ENCODE measurements at regions of chr4 and their contacts with region 1.

Region 1: GRCh38 chr4:7987148-7987989 is 47.7 kb upstream of the AFAP1 start:
- DNase-seq: peak; percentile 59
- H3K4me3 ChIP-seq: no peak overlapping the region
- H3K27ac ChIP-seq: no peak overlapping the region
- H3K4me1 ChIP-seq: peaks cover 12% of the 10 kb centered on the region
- H3K27me3 ChIP-seq: no peaks in the 10 kb centered on the region
- CTCF ChIP-seq: peak; percentile 85 to 95

Region 2: GRCh38 chr4:7761720-7762119 is 225.6 kb before region 1 on chr4:
- CTCF ChIA-PET with region 1: no interaction called
- dilution Hi-C with region 1: no loop called
- in situ Hi-C with region 1: no loop called
- intact Hi-C with region 1: loop called (anchors 1 kb)
- DNase-seq: no peak
- H3K4me3 ChIP-seq: no peak overlapping the region
- H3K27ac ChIP-seq: no peak overlapping the region
- H3K4me1 ChIP-seq: peaks cover 4% of the 10 kb centered on the region
- H3K27me3 ChIP-seq: no peaks in the 10 kb centered on the region
- CTCF ChIP-seq: peak; percentile 36 to 49

Region 3: DNA sequence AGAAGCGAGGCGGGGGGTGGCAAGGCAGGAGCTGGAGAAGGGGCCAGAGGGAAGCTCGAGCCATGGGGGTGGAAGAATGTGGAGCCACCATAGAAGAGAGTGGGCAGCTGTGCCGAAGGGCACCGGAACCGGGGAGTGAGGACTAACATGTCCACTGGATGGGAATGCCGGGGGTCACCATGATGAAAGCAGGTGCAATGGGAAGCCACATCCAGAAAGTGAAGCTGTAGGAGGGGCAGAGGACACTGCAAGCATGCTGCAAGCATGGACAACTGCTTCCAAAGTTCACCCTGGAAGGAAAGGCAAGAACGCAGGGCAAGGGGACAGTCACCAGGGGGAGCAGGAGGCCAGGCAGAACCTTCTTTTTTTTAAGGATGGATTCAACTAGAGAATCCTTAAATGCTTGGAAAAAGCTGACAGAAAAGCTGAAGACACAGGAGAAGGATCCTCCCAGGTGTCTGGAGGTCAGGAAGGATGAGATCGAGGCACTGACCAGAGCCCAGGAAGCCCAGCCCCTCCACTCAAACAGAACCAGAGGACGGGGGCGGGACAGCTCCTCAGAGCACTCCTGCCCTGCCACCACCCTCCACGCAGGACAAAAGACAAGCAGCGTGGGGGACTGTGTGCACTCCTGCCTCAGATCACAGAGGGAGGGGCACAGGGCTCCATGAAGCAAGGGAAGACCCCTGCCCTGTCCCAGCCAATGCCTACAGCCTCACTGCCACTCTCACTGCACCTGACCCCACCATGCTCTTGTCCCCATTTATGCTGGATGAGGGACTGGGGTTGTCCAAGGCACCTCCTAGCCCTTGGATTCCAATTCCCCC is 216.9 kb before region 1 on chr4:
- CTCF ChIA-PET with region 1: no interaction called
- dilution Hi-C with region 1: no loop called
- in situ Hi-C with region 1: no loop called
- intact Hi-C with region 1: loop called (anchors 1 kb)
- DNase-seq: no peak
- H3K4me3 ChIP-seq: no peak overlapping the region
- H3K27ac ChIP-seq: no peak overlapping the region
- H3K4me1 ChIP-seq: no peaks in the 10 kb centered on the region
- H3K27me3 ChIP-seq: no peaks in the 10 kb centered on the region
- CTCF ChIP-seq: peak; percentile 43 to 54

Region 4: GRCh38 chr4:7876201-7876875 is 111.0 kb before region 1 on chr4:
- CTCF ChIA-PET with region 1: no interaction called
- dilution Hi-C with region 1: no loop called
- in situ Hi-C with region 1: no loop called
- intact Hi-C with region 1: loop called (anchors 10 kb)
- DNase-seq: peak; percentile 66
- H3K4me3 ChIP-seq: no peak overlapping the region
- H3K27ac ChIP-seq: no peak overlapping the region
- H3K4me1 ChIP-seq: peaks cover 22% of the 10 kb centered on the region
- H3K27me3 ChIP-seq: no peaks in the 10 kb centered on the region
- CTCF ChIP-seq: peak; percentile 34 to 49

Region 5: DNA sequence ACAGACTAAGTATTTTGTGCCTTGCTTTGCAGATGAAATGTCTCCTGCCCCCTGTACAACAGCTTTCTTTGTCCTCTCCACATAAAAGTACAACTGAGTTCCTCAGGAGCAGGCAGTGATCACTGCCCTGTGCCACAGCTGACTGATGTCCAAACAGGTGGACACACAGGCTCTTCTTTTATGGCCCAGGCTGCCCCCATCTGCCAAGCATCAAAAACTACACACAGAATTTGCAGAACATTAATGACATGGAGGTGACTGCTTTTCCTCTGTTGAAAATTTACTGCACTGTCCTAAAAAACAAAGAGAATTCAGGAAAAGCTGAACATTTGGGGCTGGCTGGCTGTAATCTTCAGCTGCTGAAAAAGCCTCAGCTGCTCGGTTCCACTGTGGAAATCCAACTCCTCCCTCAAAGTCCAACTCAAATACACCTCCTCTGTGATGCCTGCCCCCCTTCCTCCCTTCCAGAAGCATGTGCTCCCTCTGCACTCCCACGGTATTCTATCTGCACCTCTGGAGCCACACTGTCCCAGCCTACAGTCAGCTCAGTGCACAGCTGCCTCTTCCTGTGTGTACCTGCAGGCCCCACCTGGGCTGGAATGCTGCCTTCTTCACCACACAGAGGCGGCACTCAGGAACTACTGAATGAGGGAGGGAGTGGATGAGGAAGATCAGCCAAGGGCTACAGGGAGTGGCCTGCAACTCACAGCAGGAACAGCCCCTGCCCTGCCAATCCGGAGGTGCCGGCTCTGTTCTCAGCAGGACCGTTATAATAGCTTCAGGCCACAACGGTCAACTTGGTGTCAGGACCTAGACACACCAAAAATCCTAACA is 58.0 kb before region 1 on chr4:
- CTCF ChIA-PET with region 1: no interaction called
- dilution Hi-C with region 1: no loop called
- in situ Hi-C with region 1: no loop called
- intact Hi-C with region 1: loop called (anchors 1 kb)
- DNase-seq: peak; percentile 90
- H3K4me3 ChIP-seq: no peak overlapping the region
- H3K27ac ChIP-seq: peak overlapping the region; percentile 33
- H3K4me1 ChIP-seq: peaks cover 33% of the 10 kb centered on the region
- H3K27me3 ChIP-seq: no peaks in the 10 kb centered on the region
- CTCF ChIP-seq: peak in 1 of 2 donors; percentile 56

Region 6: GRCh38 chr4:7939377-7940108 is 47.8 kb before region 1 on chr4 and contains the start of gene AFAP1:
- CTCF ChIA-PET with region 1: no interaction called
- dilution Hi-C with region 1: no loop called
- in situ Hi-C with region 1: no loop called
- intact Hi-C with region 1: loop called (anchors 2 kb)
- DNase-seq: peak; percentile 83
- H3K4me3 ChIP-seq: peak within 1 kb of the TSS; percentile 90 to 98 (median 93)
- H3K27ac ChIP-seq: peak within 1 kb of the TSS; percentile 72
- H3K4me1 ChIP-seq: peaks cover 11% of the 10 kb centered on the region
- H3K27me3 ChIP-seq: no peaks in the 10 kb centered on the region
- CTCF ChIP-seq: no peak
- total RNA-seq, gene AFAP1: 22.9 to 36.0 TPM

Region 7: GRCh38 chr4:7973545-7973981 is 13.8 kb before region 1 on chr4:
- CTCF ChIA-PET with region 1: interaction called, 13 read pairs
- dilution Hi-C with region 1: no loop called
- in situ Hi-C with region 1: no loop called
- intact Hi-C with region 1: no loop called
- DNase-seq: peak; percentile 90
- H3K4me3 ChIP-seq: no peak overlapping the region
- H3K27ac ChIP-seq: peak overlapping the region; percentile 77
- H3K4me1 ChIP-seq: peaks cover 48% of the 10 kb centered on the region
- H3K27me3 ChIP-seq: no peaks in the 10 kb centered on the region
- CTCF ChIP-seq: no peak

Region 8: GRCh38 chr4:8029689-8030088 is 42.3 kb after region 1 on chr4:
- CTCF ChIA-PET with region 1: no interaction called
- dilution Hi-C with region 1: no loop called
- in situ Hi-C with region 1: no loop called
- intact Hi-C with region 1: no loop called
- DNase-seq: peak; percentile 82
- H3K4me3 ChIP-seq: no peak overlapping the region
- H3K27ac ChIP-seq: peak overlapping the region; percentile 42
- H3K4me1 ChIP-seq: peaks cover 23% of the 10 kb centered on the region
- H3K27me3 ChIP-seq: no peaks in the 10 kb centered on the region
- CTCF ChIP-seq: no peak

Region 9: GRCh38 chr4:8090312-8090711 is 102.9 kb after region 1 on chr4:
- CTCF ChIA-PET with region 1: no interaction called
- dilution Hi-C with region 1: no loop called
- in situ Hi-C with region 1: no loop called
- intact Hi-C with region 1: no loop called
- DNase-seq: peak; percentile 75
- H3K4me3 ChIP-seq: no peak overlapping the region
- H3K27ac ChIP-seq: no peak overlapping the region
- H3K4me1 ChIP-seq: peaks cover 11% of the 10 kb centered on the region
- H3K27me3 ChIP-seq: no peaks in the 10 kb centered on the region
- CTCF ChIP-seq: no peak